Spleen (tissue), 13 donors: ENCODE measurements at regions of chr15 and their contacts with region 1.

Region 1: GRCh38 chr15:49046220-49047102 is at the start of gene SECISBP2L:
- DNase-seq: peak; percentile 97
- H3K4me3 ChIP-seq: peak within 1 kb of the TSS; percentile 84 to 98 (median 95)
- H3K27ac ChIP-seq: peak within 1 kb of the TSS; percentile 82 to 94 (median 92)
- H3K4me1 ChIP-seq: peaks cover 21 to 49% (median 40%) of the 10 kb centered on the region in 6 donors
- H3K27me3 ChIP-seq: no peaks in the 10 kb centered on the region
- CTCF ChIP-seq: peak in 6 of 11 experiments; percentile 23 to 43 (median 33)
- POLR2A ChIP-seq: peak in 1 of 3 donors; percentile 69
- total RNA-seq, gene SECISBP2L: 36.7 to 58.7 (median 51.2) TPM

Region 2: GRCh38 chr15:48810414-48811317 is 235.8 kb before region 1 on chr15 and contains the start of gene CEP152:
- intact Hi-C with region 1: loop called (anchors 5 kb)
- DNase-seq: peak; percentile 99
- H3K4me3 ChIP-seq: peak within 1 kb of the TSS; percentile 63 to 97 (median 83)
- H3K27ac ChIP-seq: peak within 1 kb of the TSS in 7 of 8 donors; percentile 64 to 87 (median 81)
- H3K4me1 ChIP-seq: peaks cover 6 to 38% (median 21%) of the 10 kb centered on the region in 6 donors
- H3K27me3 ChIP-seq: no peaks in the 10 kb centered on the region
- CTCF ChIP-seq: peak in 6 of 11 experiments; percentile 17 to 58 (median 40)
- POLR2A ChIP-seq: peak in 1 of 3 donors; percentile 66
- total RNA-seq, gene CEP152: 6.5 to 15.1 (median 9.3) TPM

Region 3: DNA sequence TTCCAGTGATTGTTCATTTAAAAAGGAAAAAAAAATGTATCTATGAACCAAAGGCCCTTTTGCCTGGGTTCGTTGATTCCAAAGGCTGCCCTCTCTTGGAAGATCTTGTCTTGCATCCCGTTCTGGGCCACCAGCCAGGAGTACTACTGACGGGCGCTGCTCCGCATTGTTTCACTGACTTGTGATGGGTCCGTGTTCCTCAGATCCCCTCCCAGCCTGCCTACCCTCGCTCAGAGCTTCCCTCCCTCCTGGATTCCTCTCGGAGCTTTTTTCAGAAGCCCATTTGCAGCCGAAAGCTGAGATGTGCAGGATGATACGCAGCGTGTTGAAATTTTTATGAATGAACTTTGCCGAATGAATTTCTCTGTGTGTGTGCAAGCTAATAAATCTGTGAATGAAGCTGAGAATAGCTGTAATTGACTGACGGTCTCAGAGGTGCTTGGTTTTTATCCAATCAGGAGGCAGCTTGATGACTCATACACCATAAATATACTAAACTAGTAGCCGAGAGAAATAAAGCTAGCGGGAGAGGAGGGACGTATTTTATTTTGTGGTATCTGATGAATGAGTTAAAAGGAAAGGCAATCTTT is 82.8 kb before region 1 on chr15 and contains the start of gene SHC4:
- intact Hi-C with region 1: no loop called
- DNase-seq: no peak
- H3K4me3 ChIP-seq: peak within 1 kb of the TSS; percentile 5 to 68 (median 32)
- H3K27ac ChIP-seq: no peak within 1 kb of the TSS
- H3K4me1 ChIP-seq: peaks cover 9 to 24% (median 21%) of the 10 kb centered on the region in 6 donors
- H3K27me3 ChIP-seq: peaks cover 0 to 46% (median 15%) of the 10 kb centered on the region in 7 donors
- CTCF ChIP-seq: peak in 1 of 11 experiments; percentile 19
- POLR2A ChIP-seq: no peak
- total RNA-seq, gene SHC4: 0.26 to 0.27 TPM in 2 of 7 donors, not detected in the others

Region 4: GRCh38 chr15:49145651-49146609 is 99.5 kb after region 1 on chr15:
- intact Hi-C with region 1: loop called (anchors 10 kb)
- DNase-seq: no peak
- H3K4me3 ChIP-seq: no peak overlapping the region
- H3K27ac ChIP-seq: no peak overlapping the region
- H3K4me1 ChIP-seq: peaks cover 14 to 66% (median 53%) of the 10 kb centered on the region in 6 donors
- H3K27me3 ChIP-seq: no peaks in the 10 kb centered on the region
- CTCF ChIP-seq: peak in 10 of 11 experiments; percentile 6 to 64 (median 47)
- POLR2A ChIP-seq: no peak

Region 5: DNA sequence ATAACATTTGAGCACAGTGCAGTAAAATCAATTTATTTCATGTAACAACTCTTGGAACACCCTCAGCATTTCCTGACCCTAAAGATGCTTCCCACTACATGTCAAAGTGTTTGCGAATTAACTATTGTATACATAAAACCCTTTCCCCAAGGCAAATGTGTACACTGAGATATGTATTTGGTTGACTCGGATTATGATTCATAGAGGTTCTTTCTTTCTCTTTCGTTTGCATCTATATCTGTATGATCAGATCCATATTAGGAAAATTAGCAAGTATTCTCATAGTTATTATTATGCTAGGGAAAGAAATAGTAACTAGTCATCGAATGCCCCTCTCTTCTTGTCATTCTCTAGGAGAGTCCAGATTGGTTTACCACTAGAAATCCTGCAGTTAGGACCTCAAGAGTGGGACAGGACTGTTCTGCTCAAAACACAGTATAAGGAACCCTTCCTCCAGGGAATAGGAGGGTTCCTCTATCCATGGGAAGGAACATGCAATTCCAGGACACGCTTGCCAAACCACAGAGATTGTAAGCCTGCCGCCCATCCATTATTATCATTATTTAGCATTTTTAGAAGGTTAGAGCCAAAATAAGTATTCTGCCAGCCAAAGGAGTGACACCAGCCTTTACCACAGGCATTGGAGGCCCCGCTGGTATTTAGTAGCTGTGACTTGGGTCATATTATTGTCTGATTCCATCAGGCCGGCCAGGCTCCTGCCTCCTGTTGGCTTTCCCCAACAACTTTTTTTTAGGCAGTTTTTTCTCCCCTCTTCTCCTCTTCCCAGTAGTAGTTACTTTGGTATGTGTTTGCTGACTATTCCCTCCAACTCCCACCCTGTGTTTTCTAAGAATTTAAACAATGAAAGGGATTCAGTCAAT is 224.3 kb after region 1 on chr15:
- intact Hi-C with region 1: no loop called
- DNase-seq: no peak
- H3K4me3 ChIP-seq: no peak overlapping the region
- H3K27ac ChIP-seq: no peak overlapping the region
- H3K4me1 ChIP-seq: no peaks in the 10 kb centered on the region
- H3K27me3 ChIP-seq: no peaks in the 10 kb centered on the region
- CTCF ChIP-seq: no peak
- POLR2A ChIP-seq: no peak